A549 (cell line): ENCODE measurements at regions of chr19 and their contacts with region 1.

Region 1: GRCh38 chr19:44093931-44094765 is at the start of gene ZNF224:
- DNase-seq: peak; percentile 94 to 97
- ATAC-seq: peak; percentile 97 to 99
- H3K4me3 ChIP-seq: peak within 1 kb of the TSS; percentile 87
- H3K27ac ChIP-seq: peak within 1 kb of the TSS; percentile 72 to 85
- H3K4me1 ChIP-seq: peaks cover 8% of the 10 kb centered on the region; the same call in 2 of the 3 replicates
- CTCF ChIP-seq: no peak
- EP300 ChIP-seq: no peak
- POLR2A ChIP-seq: peak; percentile 34
- RAD21 ChIP-seq: no peak
- polyA plus RNA-seq, gene ZNF224: 22.3 and 25.0 TPM in 2 replicates

Region 2: GRCh38 chr19:44113138-44113783 is 19.1 kb after region 1 on chr19 and contains the start of gene ZNF225:
- CTCF ChIA-PET with region 1: interaction called, 3 read pairs
- POLR2A ChIA-PET with region 1: interaction called, 18 read pairs
- DNase-seq: peak; percentile 97 to 99
- ATAC-seq: peak; percentile 98 to 99
- H3K4me3 ChIP-seq: peak within 1 kb of the TSS; percentile 79
- H3K27ac ChIP-seq: peak within 1 kb of the TSS; percentile 79 to 84
- H3K4me1 ChIP-seq: no peaks in the 10 kb centered on the region
- CTCF ChIP-seq: no peak
- EP300 ChIP-seq: no peak
- POLR2A ChIP-seq: peak; percentile 61
- RAD21 ChIP-seq: peak in 1 of 2 experiments; percentile 26; a peak in 2 of 5 replicates
- polyA plus RNA-seq, gene ZNF225: 4.3 TPM in 2 replicates